ENCODE measurements at regions of chr7 and their contacts with region 1.

Region 1: DNA sequence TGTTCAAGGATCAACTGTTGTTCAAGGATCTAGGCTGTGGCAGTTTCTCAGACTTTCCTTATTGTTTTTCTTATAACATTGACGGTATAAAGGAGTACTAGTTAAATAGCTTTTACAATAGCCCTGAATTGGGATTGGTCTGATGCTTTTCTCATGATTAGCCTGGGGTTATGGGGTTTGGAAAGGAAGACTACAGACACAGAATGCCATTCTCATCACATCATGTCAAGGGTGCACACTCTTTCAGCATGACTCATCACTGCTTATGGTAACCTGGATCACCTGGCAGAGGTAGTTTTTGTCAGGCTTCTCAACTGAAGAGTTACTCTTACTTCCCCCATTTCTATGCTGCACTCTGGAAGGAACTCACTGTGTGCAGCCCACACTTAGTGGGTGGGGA is 194.2 kb upstream of the NPSR1 start:
- DNase-seq: peak; percentile 30
- H3K4me3 Mint-ChIP-seq: no peak overlapping the region
- H3K27ac Mint-ChIP-seq: no peak overlapping the region
- H3K4me1 Mint-ChIP-seq: peaks cover 11% of the 10 kb centered on the region
- H3K27me3 Mint-ChIP-seq: peaks cover 2% of the 10 kb centered on the region
- CTCF ChIP-seq: no peak

Region 2: DNA sequence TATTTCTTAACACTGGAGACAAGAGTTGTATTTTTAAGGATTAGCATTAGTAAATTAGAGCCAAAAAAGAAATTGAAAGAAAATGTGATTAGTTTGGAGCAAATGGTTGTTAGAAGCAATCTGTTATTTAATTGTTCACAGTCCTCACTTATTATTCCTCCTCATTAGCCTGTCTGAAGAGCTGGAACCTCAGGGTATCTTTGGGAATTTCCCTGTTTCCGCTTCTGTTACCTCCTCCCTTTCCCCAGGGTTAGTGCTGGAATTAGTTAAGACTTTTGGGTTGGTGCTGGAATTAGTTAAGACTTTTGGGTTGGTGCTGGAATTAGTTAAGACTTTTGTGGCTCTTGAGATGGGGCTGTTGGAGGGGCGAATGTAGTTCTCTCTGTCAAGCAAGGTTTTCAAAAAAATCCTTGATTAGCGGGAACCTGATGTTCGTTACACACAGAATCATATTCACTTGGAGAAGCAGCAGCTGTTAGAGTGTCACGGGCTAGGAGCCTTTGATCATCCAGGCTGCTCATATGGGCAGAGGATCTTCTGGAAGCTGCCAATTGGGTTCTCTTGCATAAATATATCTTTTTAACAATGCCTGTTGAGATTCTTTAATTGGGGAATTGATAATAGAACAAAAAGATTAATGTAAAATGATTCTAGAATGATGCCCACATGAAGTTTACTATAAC is 56.8 kb before region 1 on chr7:
- CTCF ChIA-PET with region 1: no interaction called
- intact Hi-C with region 1: loop called (anchors 1 kb)
- DNase-seq: no peak
- H3K4me3 Mint-ChIP-seq: no peak overlapping the region
- H3K27ac Mint-ChIP-seq: no peak overlapping the region
- H3K4me1 Mint-ChIP-seq: no peaks in the 10 kb centered on the region
- H3K27me3 Mint-ChIP-seq: no peaks in the 10 kb centered on the region
- CTCF ChIP-seq: no peak

Measured in Calu3 (cell line).